Caco-2 (cell line): ENCODE measurements at regions of chr2 and their contacts with region 1.

Region 1: DNA sequence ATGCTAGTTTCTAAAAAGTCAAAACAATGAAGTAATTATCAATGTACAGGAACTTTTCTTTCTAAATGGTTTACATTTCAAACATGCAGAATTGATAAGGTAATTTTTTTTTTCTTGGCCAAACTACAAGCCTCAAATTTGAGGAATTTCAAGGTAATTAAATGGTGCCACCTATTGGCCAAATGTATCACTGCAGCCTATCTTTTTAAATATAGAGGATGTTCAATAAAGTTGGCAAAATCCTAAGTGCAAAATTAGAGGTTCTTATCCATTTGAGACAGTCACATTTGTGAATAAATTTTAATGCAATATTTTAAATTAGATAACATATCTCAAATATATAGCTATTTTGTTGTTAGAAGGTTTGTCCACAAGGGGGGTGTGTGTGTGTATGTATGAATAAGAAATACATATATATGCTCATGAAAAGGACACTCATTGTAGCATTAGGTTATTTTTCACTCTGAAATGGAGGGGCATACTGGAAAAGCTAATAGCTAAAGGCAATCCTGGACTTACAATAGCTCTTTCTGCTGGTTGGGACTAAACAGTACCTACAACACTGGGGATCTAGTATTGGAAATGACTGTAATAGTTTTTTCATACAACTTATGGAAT is 26.2 kb downstream of the MMADHC start:
- DNase-seq: peak in 1 of 2 experiments; percentile 55
- H3K4me3 ChIP-seq: no peak overlapping the region
- H3K4me3 Mint-ChIP-seq: no peak overlapping the region
- H3K27ac Mint-ChIP-seq: no peak overlapping the region
- H3K4me1 ChIP-seq: peaks cover 7% of the 10 kb centered on the region; the same call in 1 of the 2 replicates
- H3K4me1 Mint-ChIP-seq: no peaks in the 10 kb centered on the region
- H3K27me3 ChIP-seq: no peaks in the 10 kb centered on the region
- H3K27me3 Mint-ChIP-seq: no peaks in the 10 kb centered on the region
- CTCF ChIP-seq: peak; percentile 62 to 84

Region 2: DNA sequence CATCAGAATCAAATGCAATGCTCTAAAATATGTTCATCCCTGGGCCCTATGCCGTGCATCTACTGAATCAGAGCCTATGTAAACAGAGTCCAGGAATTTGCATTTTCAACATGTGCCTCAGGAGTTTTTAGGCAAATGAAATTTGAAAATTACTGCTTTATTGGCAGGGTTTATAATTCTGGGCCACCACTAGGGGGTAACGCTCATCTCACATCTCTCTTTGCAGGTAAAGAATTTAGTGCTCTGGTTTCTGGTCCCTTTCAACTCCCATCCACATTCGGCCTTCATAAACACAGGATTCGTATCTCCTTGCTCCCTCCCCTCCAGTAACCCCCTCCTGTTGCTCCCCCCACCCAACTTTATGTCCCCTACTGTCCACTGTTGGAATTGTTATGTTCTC is 473.7 kb before region 1 on chr2:
- CTCF ChIA-PET with region 1: no interaction called
- POLR2A ChIA-PET with region 1: no interaction called
- intact Hi-C with region 1: loop called (anchors 5 kb)
- DNase-seq: peak in 1 of 2 experiments; percentile 45
- H3K4me3 ChIP-seq: no peak overlapping the region
- H3K4me3 Mint-ChIP-seq: no peak overlapping the region
- H3K27ac Mint-ChIP-seq: no peak overlapping the region
- H3K4me1 ChIP-seq: no peaks in the 10 kb centered on the region
- H3K4me1 Mint-ChIP-seq: no peaks in the 10 kb centered on the region
- H3K27me3 ChIP-seq: no peaks in the 10 kb centered on the region
- H3K27me3 Mint-ChIP-seq: no peaks in the 10 kb centered on the region
- CTCF ChIP-seq: peak; percentile 50 to 68

Region 3: DNA sequence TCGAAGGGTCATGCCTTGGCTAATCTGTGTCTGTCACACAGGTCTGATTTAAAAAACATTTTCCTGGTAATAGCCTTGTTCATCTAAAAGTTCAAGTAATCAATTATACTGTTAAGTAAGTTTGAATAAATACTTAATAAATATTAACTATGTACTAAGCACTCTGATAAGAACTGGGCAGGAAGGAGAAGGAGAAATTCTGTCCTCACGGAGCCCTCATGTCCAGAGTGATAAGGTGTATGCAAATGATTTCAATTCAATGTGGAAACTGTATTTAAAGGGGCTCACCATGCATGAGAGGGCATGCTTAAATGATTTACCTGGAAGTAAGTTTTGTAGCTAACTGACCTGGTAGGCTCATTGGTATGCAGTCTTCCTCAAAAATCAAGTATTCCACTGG is 325.0 kb before region 1 on chr2:
- CTCF ChIA-PET with region 1: no interaction called
- POLR2A ChIA-PET with region 1: no interaction called
- intact Hi-C with region 1: no loop called
- DNase-seq: no peak
- H3K4me3 ChIP-seq: no peak overlapping the region
- H3K4me3 Mint-ChIP-seq: no peak overlapping the region
- H3K27ac Mint-ChIP-seq: no peak overlapping the region
- H3K4me1 ChIP-seq: no peaks in the 10 kb centered on the region
- H3K4me1 Mint-ChIP-seq: peaks cover 14% of the 10 kb centered on the region
- H3K27me3 ChIP-seq: no peaks in the 10 kb centered on the region
- H3K27me3 Mint-ChIP-seq: no peaks in the 10 kb centered on the region
- CTCF ChIP-seq: no peak

Region 4: GRCh38 chr2:149313512-149313972 is 247.9 kb before region 1 on chr2:
- CTCF ChIA-PET with region 1: interaction called, 5 read pairs
- POLR2A ChIA-PET with region 1: no interaction called
- intact Hi-C with region 1: loop called (anchors 1 kb)
- DNase-seq: peak in 1 of 2 experiments; percentile 56
- H3K4me3 ChIP-seq: no peak overlapping the region
- H3K4me3 Mint-ChIP-seq: no peak overlapping the region
- H3K27ac Mint-ChIP-seq: no peak overlapping the region
- H3K4me1 ChIP-seq: 0 out of 2 replicates have a peak, but pooled peaks cover 4% of the 10 kb centered on the region
- H3K4me1 Mint-ChIP-seq: peaks cover 28% of the 10 kb centered on the region
- H3K27me3 ChIP-seq: no peaks in the 10 kb centered on the region
- H3K27me3 Mint-ChIP-seq: no peaks in the 10 kb centered on the region
- CTCF ChIP-seq: peak; percentile 82 to 84

Region 5: DNA sequence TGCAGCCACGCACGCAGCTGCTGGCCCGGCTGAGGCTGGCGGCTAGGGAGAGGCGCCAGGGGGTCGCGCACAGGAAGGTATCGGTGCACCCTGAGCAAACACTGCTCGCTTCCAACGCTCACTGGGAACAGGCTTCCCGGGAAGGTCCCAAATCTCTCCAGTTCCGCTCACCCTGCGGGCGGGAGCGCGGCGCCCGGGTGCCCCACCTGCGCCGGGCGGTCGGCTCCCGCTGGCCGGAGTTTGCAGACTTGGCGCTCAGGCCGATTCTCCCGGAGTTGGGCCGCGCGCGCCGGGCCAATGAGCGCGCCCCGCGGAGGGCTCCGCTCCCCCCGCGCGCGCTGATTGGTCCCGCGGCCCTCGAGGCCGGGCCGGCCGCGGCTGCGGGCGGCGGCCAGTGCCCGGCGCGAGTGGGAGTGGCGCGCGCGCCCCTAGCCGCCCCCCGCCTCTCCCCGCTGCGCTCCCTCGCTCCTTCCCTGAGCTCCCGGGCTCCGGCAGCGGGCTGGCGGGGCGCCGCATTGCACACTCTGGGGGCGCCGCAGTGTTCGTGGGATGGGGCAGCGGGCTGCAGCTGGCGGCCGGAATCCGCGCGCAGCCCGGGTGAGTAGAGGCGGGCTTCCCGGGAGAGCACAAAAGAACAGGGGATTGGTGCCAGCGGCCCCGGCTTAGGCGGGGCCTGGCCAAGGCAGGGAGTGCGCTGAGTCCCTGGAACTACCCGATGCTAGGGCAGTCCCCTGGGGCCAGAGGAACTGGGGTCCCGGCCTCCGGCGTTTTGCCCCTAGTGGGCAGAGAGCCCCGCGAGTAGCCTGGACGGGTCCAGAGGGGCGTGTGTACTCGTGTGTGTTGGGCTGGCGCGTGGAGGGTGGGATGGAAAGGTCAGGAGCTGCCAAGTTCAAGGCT is 231.0 kb before region 1 on chr2 and contains the start of gene LYPD6:
- CTCF ChIA-PET with region 1: interaction called, 4 read pairs
- POLR2A ChIA-PET with region 1: interaction called, 4 read pairs
- intact Hi-C with region 1: loop called (anchors 1 kb)
- DNase-seq: peak; percentile 75 to 89
- H3K4me3 ChIP-seq: peak within 1 kb of the TSS; percentile 89
- H3K4me3 Mint-ChIP-seq: peak within 1 kb of the TSS; percentile 92
- H3K27ac Mint-ChIP-seq: peak within 1 kb of the TSS; percentile 72
- H3K4me1 ChIP-seq: no peaks in the 10 kb centered on the region; the same call in 1 of the 2 replicates
- H3K4me1 Mint-ChIP-seq: peaks cover 22% of the 10 kb centered on the region
- H3K27me3 ChIP-seq: no peaks in the 10 kb centered on the region
- H3K27me3 Mint-ChIP-seq: no peaks in the 10 kb centered on the region
- CTCF ChIP-seq: no peak
- total RNA-seq, gene LYPD6: 9.0 and 10.5 TPM in 2 replicates

Region 6: DNA sequence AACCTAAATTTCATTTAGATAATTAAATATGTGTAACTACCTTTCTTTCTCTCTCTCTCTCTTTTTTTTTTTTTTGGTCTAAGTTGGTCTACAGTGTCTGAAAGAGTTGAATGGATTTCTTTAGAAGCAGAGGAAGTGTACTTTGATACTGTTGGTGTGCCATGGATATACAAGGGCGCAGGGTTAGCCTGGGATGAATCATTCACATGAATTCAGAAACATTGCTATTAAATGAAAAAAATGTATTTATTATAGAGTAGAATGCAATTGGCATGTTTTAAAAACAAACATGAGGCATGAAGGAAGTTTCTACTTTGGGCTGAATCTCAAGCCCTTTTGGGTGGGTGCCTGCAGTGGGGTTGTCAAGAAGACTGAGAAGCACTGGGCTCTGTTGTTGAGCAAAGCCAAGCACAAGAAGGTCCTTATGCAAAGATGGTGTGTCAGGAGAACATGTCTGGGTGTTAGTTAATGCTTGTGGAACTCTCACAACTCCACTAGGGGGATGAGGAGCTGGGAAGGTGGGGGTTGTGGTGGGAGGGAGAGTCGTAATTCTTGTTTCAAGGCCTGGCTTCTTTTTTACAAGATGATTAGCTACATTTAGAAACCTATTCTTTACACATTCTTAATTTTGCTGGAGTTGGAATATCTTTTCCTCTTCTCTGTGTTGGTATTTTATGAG is 173.2 kb before region 1 on chr2:
- CTCF ChIA-PET with region 1: no interaction called
- POLR2A ChIA-PET with region 1: no interaction called
- intact Hi-C with region 1: loop called (anchors 2 kb)
- DNase-seq: peak; percentile 40 to 44
- H3K4me3 ChIP-seq: no peak overlapping the region
- H3K4me3 Mint-ChIP-seq: no peak overlapping the region
- H3K27ac Mint-ChIP-seq: no peak overlapping the region
- H3K4me1 ChIP-seq: no peaks in the 10 kb centered on the region
- H3K4me1 Mint-ChIP-seq: no peaks in the 10 kb centered on the region
- H3K27me3 ChIP-seq: no peaks in the 10 kb centered on the region
- H3K27me3 Mint-ChIP-seq: no peaks in the 10 kb centered on the region
- CTCF ChIP-seq: peak; percentile 33 to 43

Region 7: DNA sequence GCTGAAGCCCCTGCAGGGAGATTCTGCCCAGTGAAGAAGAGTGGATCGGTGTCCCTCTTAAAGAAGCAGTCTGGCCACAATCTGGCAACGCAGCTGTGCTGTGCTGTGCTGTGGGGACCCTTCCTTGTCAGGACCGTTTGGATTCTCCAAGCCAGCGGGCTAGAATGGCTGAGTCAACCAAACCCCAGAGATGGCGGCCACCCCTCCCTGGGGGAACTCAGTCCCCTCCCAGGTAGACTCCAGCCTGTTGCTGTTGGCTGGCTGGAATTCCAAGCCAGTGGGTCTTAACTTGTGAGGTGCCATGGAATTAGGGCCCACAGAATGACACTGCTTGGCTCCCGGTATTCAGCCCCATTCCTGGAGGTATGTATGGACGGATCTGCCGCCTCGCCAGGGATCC is 36.1 kb before region 1 on chr2:
- CTCF ChIA-PET with region 1: no interaction called
- POLR2A ChIA-PET with region 1: no interaction called
- intact Hi-C with region 1: no loop called
- DNase-seq: no peak
- H3K4me3 ChIP-seq: no peak overlapping the region
- H3K4me3 Mint-ChIP-seq: no peak overlapping the region
- H3K27ac Mint-ChIP-seq: no peak overlapping the region
- H3K4me1 ChIP-seq: no peaks in the 10 kb centered on the region
- H3K4me1 Mint-ChIP-seq: peaks cover 6% of the 10 kb centered on the region
- H3K27me3 ChIP-seq: no peaks in the 10 kb centered on the region
- H3K27me3 Mint-ChIP-seq: no peaks in the 10 kb centered on the region
- CTCF ChIP-seq: no peak

Region 8: GRCh38 chr2:149733936-149734685 is 172.7 kb after region 1 on chr2:
- CTCF ChIA-PET with region 1: no interaction called
- POLR2A ChIA-PET with region 1: no interaction called
- intact Hi-C with region 1: no loop called
- DNase-seq: peak; percentile 75 to 78
- H3K4me3 ChIP-seq: no peak overlapping the region
- H3K4me3 Mint-ChIP-seq: no peak overlapping the region
- H3K27ac Mint-ChIP-seq: peak overlapping the region; percentile 25
- H3K4me1 ChIP-seq: peaks cover 36% of the 10 kb centered on the region
- H3K4me1 Mint-ChIP-seq: peaks cover 13% of the 10 kb centered on the region
- H3K27me3 ChIP-seq: no peaks in the 10 kb centered on the region
- H3K27me3 Mint-ChIP-seq: no peaks in the 10 kb centered on the region
- CTCF ChIP-seq: no peak